ENCODE measurements at regions of chr7 and their contacts with region 1.

Region 1: GRCh38 chr7:85030893-85031292 is 156.0 kb downstream of the SEMA3D start:
- DNase-seq: peak; percentile 34
- H3K4me3 ChIP-seq: no peak overlapping the region
- H3K27ac ChIP-seq: no peak overlapping the region
- H3K4me1 ChIP-seq: no peaks in the 10 kb centered on the region
- CTCF ChIP-seq: peak; percentile 84

Region 2: DNA sequence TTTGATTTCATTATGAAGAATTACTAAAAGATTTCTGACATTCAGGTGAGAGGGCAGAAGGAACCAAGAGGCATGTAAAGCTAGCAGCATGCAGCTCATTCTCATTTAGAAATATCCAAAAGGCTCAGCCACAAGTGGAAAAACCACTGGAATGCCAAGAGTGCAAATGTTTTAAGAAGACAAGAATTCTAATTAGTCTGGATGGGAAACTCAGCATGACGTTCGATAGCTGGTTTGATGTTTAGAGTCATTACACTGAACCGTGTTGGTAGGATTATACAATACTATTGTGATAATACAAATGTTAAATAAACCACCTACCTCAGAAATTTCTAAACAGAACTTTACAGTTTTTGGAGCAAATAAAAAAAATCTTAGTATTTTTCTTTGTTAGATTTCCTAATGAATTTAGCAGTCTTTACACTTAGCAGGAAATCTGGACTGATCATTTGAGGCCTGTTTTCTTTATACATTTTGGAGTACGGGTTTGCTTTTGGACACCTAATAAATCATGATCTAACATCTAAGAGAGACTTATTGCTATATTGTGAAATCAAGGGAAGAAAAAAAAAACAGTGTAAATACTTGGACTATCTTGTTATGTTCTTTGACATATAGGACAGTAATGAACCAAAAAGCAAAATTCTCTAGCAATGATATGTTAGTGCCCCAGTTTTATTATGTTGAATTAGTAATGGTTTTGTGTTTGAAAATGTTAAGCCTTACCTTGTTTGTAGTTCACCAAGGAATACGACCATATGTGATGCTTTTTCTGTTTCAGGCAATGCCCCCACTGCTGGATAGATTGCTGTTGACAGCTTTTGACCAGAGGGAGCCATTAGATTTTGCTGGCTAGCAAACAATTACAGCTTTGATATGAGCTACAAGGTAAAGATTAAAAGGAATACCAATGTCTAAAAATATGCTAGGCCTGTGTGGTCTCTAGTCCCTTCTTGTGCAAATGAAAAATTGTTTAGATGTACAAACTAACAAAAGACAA is 482.2 kb before region 1 on chr7:
- CTCF ChIA-PET with region 1: no interaction called
- POLR2A ChIA-PET with region 1: interaction called, 10 read pairs
- intact Hi-C with region 1: no loop called
- DNase-seq: no peak
- H3K4me3 ChIP-seq: no peak overlapping the region
- H3K27ac ChIP-seq: no peak overlapping the region
- H3K4me1 ChIP-seq: no peaks in the 10 kb centered on the region
- CTCF ChIP-seq: no peak

Region 3: DNA sequence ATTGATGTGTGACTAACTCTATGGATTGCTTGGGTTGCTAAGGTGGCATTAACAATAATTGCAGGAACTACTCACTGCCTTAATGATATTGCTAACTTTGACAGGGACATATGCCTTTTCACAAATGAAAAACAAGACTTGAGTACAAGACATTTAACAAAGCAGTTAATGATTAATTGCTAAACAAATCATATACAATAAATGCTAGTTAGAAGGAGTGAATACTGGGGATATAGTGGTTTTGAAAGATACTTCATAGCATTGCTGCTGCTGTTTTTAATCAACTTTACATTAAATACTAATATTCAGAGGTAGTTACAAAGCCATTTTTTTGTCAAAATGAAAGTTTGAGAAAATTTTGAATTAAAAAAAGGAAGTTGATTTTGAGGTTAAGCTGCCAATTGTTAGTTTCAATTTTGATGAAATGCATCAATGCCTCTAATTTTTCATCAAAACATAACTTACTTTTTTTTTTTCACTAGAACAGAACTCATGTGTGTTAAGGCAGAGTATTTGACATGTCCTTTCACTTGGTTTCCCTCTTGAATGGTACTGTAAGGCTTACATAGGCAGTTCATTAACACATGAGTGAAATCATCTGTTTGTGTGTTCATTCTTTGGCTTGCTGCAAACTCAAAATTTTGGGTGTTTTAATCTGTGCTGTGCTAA is 262.1 kb after region 1 on chr7:
- CTCF ChIA-PET with region 1: no interaction called
- POLR2A ChIA-PET with region 1: no interaction called
- intact Hi-C with region 1: loop called (anchors 10 kb)
- DNase-seq: peak; percentile 19
- H3K4me3 ChIP-seq: no peak overlapping the region
- H3K27ac ChIP-seq: no peak overlapping the region
- H3K4me1 ChIP-seq: peaks cover 23% of the 10 kb centered on the region
- CTCF ChIP-seq: no peak

Region 4: DNA sequence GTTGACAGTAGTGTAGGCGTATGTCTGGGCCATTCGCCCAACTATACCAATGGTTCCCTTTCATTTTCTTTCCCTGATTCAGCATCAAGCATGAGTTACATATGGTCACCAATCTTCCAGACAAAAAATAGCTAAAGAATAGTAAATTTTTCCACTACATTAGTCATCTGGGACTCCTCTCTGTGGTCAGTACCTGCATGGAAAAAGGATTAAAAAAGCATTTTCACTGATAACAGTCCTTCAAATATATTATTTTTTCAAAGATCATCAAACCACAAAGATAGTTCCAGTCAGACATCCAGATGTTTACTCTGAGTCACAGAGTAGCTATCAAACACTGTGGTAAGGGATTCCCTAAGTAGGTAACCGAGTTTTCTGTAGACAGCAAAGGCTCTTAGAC is 458.6 kb after region 1 on chr7:
- CTCF ChIA-PET with region 1: no interaction called
- POLR2A ChIA-PET with region 1: no interaction called
- intact Hi-C with region 1: no loop called
- DNase-seq: no peak
- H3K4me3 ChIP-seq: no peak overlapping the region
- H3K27ac ChIP-seq: no peak overlapping the region
- H3K4me1 ChIP-seq: no peaks in the 10 kb centered on the region
- CTCF ChIP-seq: no peak

Measured in OCI-LY7 (cell line).